ENCODE measurements at regions of chr6 and their contacts with region 1.

Region 1: DNA sequence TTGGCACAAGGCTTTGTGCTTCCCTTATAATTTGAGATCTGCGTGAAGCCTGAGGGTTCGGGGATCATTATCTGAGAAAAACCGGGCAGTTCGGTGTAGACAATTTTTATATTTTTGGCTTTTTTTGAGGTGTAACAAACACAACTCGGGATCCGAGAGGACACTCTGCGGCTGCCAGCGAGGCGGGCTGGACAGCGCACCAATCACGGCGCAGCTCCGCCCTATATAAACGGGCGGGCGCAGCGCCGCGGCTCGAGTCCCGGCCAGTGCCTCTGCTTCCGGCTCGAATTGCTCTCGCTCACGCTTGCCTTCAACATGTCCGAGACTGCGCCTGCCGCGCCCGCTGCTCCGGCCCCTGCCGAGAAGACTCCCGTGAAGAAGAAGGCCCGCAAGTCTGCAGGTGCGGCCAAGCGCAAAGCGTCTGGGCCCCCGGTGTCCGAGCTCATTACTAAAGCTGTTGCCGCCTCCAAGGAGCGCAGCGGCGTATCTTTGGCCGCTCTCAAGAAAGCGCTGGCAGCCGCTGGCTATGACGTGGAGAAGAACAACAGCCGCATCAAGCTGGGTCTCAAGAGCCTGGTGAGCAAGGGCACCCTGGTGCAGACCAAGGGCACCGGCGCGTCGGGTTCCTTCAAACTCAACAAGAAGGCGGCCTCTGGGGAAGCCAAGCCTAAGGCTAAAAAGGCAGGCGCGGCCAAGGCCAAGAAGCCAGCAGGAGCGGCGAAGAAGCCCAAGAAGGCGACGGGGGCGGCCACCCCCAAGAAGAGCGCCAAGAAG is 69.0 kb downstream of the HFE start:
- DNase-seq: peak; percentile 87
- ATAC-seq: peak; percentile 59
- H3K4me3 Mint-ChIP-seq: peak overlapping the region; percentile 88
- H3K27ac Mint-ChIP-seq: peak overlapping the region; percentile 99
- H3K4me1 Mint-ChIP-seq: peaks cover 45% of the 10 kb centered on the region
- H3K27me3 Mint-ChIP-seq: no peaks in the 10 kb centered on the region
- CTCF ChIP-seq: no peak

Region 2: GRCh38 chr6:25649611-25650010 is 506.7 kb before region 1 on chr6:
- CTCF ChIA-PET with region 1: no interaction called
- POLR2A ChIA-PET with region 1: no interaction called
- intact Hi-C with region 1: no loop called
- DNase-seq: no peak
- ATAC-seq: no peak
- H3K4me3 Mint-ChIP-seq: no peak overlapping the region
- H3K27ac Mint-ChIP-seq: no peak overlapping the region
- H3K4me1 Mint-ChIP-seq: no peaks in the 10 kb centered on the region
- H3K27me3 Mint-ChIP-seq: peaks cover 40% of the 10 kb centered on the region
- CTCF ChIP-seq: no peak

Region 3: DNA sequence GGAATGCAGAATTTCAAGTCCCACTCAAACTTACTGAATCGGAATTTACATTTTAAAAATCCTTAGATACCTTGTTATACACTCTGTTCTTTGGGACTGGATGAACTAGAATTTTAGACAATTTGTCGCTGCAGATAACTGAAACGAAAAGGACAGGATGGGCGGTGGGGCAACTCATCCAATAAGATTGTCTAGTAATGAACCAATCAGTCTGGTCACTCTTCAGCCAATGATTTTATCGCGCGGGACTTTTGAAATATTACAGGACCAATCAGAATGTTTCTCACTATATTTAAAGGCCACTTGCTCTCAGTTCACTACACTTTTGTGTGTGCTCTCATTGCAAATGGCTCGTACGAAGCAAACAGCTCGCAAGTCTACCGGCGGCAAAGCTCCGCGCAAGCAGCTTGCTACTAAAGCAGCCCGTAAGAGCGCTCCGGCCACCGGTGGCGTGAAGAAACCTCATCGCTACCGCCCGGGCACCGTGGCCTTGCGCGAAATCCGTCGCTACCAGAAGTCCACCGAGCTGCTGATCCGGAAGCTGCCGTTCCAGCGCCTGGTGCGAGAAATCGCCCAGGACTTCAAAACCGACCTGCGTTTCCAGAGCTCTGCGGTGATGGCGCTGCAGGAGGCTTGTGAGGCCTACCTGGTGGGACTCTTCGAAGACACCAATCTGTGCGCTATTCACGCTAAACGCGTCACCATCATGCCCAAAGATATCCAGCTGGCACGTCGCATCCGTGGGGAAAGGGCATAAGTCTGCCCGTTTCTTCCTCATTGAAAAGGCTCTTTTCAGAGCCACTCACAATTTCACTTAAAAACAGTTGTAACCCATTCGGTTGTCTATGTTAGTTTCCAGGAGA is 111.0 kb before region 1 on chr6:
- CTCF ChIA-PET with region 1: no interaction called
- POLR2A ChIA-PET with region 1: interaction called, 153 read pairs
- intact Hi-C with region 1: loop called (anchors 1 kb)
- DNase-seq: peak; percentile 51
- ATAC-seq: peak; percentile 58
- H3K4me3 Mint-ChIP-seq: peak overlapping the region; percentile 91
- H3K27ac Mint-ChIP-seq: peak overlapping the region; percentile 99
- H3K4me1 Mint-ChIP-seq: peaks cover 24% of the 10 kb centered on the region
- H3K27me3 Mint-ChIP-seq: no peaks in the 10 kb centered on the region
- CTCF ChIP-seq: no peak

Region 4: DNA sequence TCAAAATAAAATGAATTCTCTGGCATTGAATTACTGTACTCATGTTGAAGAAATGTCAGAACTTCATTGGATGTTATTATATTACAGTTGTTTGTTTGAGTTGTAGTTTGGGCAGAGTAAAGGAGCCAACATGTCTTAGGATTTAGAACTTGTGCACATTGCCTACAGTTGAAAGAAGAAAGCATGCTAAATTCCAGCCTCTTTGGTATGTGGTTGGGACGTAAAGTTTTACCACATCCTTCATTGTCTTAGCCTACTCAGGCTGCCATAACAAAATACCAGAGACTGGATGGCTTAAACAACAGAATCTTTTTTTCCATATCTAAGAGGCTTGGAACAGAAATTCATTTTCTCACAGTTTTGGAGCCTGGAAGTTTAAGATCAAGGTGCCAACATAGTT is 26.6 kb before region 1 on chr6:
- CTCF ChIA-PET with region 1: interaction called, 31 read pairs
- POLR2A ChIA-PET with region 1: interaction called, 1,682 read pairs
- intact Hi-C with region 1: no loop called
- DNase-seq: no peak
- ATAC-seq: no peak
- H3K4me3 Mint-ChIP-seq: no peak overlapping the region
- H3K27ac Mint-ChIP-seq: no peak overlapping the region
- H3K4me1 Mint-ChIP-seq: peaks cover 71% of the 10 kb centered on the region
- H3K27me3 Mint-ChIP-seq: no peaks in the 10 kb centered on the region
- CTCF ChIP-seq: no peak

Region 5: DNA sequence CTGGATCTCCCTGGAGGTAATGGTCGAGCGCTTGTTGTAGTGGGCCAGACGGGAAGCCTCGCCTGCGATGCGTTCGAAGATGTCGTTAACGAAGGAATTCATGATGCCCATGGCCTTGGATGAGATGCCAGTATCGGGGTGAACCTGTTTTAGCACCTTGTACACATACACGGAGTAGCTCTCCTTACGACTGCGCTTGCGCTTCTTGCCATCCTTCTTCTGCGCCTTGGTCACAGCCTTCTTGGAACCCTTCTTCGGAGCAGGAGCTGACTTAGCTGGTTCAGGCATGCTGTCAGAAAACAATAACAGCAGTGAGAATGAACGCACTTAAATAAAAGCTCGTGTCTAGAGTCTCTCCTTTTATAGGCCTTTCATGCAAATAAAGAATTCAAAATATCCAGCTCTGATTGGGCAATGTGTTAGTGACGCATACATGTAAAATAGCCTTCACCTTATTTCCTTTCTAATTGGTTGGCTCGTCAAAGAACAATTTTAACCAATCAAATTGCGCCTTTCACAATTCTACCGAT is 60.2 kb after region 1 on chr6:
- CTCF ChIA-PET with region 1: no interaction called
- POLR2A ChIA-PET with region 1: interaction called, 260 read pairs
- intact Hi-C with region 1: loop called (anchors 1 kb)
- DNase-seq: peak; percentile 62
- ATAC-seq: peak; percentile 78
- H3K4me3 Mint-ChIP-seq: no peak overlapping the region
- H3K27ac Mint-ChIP-seq: no peak overlapping the region
- H3K4me1 Mint-ChIP-seq: peaks cover 12% of the 10 kb centered on the region
- H3K27me3 Mint-ChIP-seq: no peaks in the 10 kb centered on the region
- CTCF ChIP-seq: no peak

Region 6: DNA sequence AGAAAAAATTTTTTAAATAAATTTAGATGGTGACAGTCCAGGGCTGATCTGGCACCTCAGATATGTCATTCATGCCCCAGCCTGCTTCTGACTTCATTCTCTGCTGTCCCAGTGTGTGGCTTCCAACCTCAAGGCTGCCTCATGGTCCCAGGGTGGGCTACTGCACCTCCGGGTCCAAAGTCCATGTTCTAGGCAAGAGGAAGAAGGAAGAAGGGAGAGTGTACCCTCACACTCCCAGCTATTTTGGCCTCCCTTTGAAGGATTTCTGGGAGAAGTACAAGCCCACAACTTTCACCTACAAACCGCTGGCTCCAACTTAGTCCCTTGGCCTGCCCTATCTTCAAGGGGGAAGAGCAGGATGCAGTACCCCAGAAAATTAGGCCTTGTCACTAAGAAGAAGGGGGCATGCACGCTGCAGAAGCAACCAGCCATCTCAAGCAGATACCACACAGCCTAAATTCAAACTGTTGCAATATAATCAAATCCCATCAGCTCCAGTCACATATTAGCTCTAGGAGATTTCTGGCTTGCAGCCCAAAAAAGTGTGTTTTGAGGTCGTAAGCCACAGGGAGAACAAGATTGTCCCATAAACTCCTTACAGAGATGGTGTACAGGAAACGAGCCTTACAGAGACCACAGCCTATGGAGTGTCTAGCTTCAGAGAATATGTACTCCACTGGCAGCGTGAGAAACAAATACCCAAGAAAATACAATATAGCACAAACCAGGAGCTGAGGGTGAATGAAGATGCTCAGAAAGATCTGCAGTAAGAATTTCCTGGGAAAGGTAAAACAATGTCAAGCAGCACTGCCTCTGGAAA is 207.8 kb after region 1 on chr6:
- CTCF ChIA-PET with region 1: no interaction called
- POLR2A ChIA-PET with region 1: interaction called, 14 read pairs
- intact Hi-C with region 1: no loop called
- DNase-seq: no peak
- ATAC-seq: no peak
- H3K4me3 Mint-ChIP-seq: no peak overlapping the region
- H3K27ac Mint-ChIP-seq: no peak overlapping the region
- H3K4me1 Mint-ChIP-seq: peaks cover 39% of the 10 kb centered on the region
- H3K27me3 Mint-ChIP-seq: peaks cover 7% of the 10 kb centered on the region
- CTCF ChIP-seq: no peak

Region 7: DNA sequence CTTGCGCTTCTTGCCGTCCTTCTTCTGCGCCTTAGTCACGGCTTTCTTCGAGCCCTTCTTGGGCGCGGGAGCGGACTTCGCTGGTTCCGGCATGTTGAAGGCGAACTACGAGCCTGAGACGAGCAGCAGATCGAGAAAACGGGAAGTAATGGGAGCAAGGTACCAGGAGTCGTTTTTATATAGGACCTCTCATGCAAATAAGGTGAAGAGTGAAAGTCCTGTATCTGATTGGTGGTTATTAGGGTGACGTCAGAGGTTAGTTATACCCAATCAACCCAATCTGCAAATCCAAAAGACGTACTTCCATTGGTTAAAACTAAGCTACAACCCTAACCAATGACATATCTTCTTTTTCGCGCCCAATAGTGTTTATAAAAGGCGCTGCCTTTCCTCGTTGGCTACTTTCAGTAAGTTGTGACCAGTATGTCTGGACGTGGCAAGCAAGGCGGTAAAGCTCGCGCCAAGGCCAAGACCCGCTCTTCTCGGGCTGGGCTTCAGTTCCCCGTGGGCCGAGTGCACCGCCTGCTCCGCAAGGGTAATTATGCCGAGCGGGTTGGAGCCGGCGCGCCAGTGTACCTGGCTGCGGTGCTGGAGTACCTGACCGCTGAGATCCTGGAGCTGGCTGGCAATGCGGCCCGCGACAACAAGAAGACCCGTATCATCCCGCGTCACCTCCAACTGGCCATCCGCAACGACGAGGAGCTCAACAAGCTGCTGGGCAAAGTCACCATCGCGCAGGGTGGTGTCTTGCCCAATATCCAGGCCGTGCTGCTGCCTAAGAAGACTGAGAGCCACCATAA is 990.6 kb after region 1 on chr6:
- CTCF ChIA-PET with region 1: no interaction called
- POLR2A ChIA-PET with region 1: interaction called, 110 read pairs
- intact Hi-C with region 1: loop called (anchors 2 kb)
- DNase-seq: peak; percentile 70
- ATAC-seq: peak; percentile 80
- H3K4me3 Mint-ChIP-seq: no peak overlapping the region
- H3K27ac Mint-ChIP-seq: no peak overlapping the region
- H3K4me1 Mint-ChIP-seq: peaks cover 26% of the 10 kb centered on the region
- H3K27me3 Mint-ChIP-seq: no peaks in the 10 kb centered on the region
- CTCF ChIP-seq: no peak

Region 8: DNA sequence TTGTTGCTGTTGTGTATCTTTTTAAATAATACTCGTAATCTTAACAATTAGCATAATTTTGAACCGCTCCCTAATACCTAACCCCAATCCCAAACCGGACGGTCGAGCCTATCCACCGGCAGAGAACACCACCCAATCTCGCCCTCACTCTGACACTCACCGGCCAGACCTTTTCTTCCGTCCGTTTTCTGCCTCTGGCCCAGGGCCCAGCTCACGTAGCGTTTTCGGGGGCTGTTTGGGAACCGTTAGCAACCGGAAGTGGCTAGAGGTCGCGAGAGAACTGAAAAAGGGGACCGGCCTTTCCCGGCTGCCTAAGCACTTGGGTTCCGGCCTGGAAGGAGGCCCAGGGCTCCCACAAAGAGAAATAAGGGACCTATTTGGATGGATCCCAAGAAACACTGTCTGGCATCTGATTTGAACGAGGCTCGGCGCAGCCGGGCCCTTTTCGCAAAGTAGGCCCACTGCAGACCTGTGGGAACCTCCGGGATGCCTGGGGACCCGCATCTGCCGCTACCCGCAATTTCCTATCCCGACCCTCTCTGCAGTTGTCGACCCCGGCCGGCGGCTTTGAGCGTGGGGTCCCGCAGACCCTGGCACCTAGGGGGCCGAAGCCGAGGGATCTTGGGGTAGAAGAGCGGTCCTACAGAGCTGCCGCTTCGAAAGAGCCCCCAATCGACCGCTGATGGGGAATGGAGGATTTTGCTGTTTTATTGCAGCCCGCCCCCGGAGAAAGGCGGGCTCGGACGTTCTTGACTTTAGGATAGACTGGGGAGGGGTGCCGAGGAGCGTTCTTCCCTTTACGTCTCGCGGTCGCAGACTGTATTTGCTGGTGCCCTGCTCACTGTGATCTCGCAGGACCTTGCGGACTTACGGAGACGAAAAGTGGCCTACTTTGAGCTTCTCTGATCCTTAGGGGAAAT is 1980.6 kb after region 1 on chr6:
- CTCF ChIA-PET with region 1: no interaction called
- POLR2A ChIA-PET with region 1: interaction called, 15 read pairs
- intact Hi-C with region 1: no loop called
- DNase-seq: peak; percentile 69
- ATAC-seq: peak; percentile 42
- H3K4me3 Mint-ChIP-seq: peak overlapping the region; percentile 98
- H3K27ac Mint-ChIP-seq: peak overlapping the region; percentile 100
- H3K4me1 Mint-ChIP-seq: peaks cover 76% of the 10 kb centered on the region
- H3K27me3 Mint-ChIP-seq: no peaks in the 10 kb centered on the region
- CTCF ChIP-seq: no peak

Measured in activated B cell treated with CpG ODN at 0.5 μM for 24 hours (primary cell).